ENCODE measurements at regions of chr9 and their contacts with region 1.

Region 1: DNA sequence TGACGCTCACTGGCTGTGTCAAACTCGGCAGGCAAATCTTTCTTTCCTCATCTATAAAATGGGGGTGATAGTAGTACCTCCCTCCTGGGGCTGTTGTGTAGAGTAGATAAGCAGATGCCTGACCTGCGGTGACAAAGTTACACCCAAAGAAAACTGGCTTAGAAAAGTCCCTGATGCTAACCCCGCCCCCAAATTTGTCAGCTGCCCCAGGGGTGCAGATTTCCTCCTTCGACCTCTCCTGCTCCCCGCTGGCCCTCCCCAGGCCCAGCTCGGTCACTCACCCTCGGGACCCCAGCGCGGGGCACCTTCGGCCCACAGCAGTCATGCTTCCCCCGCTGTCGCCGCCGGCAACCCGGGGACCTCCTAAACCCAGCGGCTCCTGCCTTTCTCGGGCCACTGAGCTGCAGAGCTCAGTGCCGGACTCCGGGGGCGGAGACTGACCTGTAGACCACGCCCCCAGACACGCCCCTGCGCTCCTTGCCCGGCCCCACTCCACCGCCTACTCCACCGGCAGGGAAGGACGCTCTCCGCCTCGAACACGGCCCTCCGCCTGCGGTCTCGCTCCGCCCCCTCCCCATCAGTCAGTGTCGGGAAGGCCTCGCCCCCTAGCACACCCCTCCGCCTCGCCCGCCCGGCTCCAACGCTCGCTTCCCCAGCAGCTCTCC is 7.4 kb downstream of the SH2D3C start:
- DNase-seq: peak; percentile 93

Region 2: DNA sequence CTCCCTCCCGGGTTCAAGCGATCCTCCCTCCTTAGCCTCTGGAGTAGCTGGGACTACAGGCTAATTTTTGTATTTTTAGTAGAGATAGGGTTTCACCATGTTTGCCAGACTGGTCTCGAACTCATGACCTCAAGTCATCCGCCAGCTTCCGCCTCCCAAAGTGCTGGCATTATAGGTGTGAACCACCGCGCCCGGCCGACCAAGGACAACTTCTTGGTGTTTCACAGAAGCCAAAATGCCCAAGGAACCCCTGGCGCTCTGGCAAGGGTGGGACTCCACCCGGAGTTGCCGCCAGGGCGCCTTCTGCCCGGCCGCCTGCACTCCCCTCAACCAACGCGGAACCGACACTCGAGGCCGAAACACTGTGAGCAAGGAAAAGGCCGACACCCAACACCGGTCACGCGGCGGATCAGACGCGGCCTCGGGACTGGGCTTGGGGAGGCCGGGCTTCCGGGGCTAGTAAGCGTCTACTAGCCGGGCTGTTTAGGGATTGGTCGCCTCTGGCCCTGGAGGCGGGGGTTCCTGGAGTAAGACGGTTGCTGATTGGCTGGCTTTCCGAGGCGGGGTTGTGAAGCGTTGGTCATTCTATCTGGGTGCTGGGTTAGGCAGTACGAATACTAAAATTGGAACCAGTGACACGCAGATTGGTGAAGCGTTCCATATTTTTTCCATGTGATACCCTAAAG is 71.9 kb before region 1 on chr9:
- in situ Hi-C with region 1: no loop called
- DNase-seq: peak; percentile 99

Region 3: GRCh38 chr9:127715394-127716337 is 55.4 kb before region 1 on chr9 and contains the starts of genes PTRH1 and TTC16:
- in situ Hi-C with region 1: no loop called
- DNase-seq: peak; percentile 97
- total RNA-seq, gene PTRH1: 33.3 and 35.0 TPM in 2 replicates
- total RNA-seq, gene TTC16: not detected in 2 replicates

Region 4: DNA sequence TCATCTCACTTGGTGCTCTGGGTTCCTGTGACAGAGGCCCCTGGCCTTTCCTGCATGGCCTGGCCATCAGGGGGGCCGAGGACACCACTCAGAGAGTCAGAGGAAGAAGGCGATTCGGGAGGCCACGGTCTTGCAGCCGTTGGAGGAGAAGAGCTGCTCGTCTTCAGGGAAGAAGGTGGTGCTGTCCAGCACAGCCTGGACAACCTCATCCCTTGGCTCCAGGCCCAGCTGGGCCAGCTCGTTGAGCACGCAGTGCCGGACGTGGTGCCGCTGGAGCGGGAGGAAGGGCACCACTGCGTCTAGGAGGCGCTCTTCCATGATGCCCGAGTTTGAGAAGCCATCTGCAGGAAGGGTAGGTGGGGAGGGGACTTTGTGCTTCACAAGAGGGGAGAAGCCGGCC is 39.1 kb before region 1 on chr9:
- in situ Hi-C with region 1: no loop called
- DNase-seq: peak; percentile 43

Region 5: DNA sequence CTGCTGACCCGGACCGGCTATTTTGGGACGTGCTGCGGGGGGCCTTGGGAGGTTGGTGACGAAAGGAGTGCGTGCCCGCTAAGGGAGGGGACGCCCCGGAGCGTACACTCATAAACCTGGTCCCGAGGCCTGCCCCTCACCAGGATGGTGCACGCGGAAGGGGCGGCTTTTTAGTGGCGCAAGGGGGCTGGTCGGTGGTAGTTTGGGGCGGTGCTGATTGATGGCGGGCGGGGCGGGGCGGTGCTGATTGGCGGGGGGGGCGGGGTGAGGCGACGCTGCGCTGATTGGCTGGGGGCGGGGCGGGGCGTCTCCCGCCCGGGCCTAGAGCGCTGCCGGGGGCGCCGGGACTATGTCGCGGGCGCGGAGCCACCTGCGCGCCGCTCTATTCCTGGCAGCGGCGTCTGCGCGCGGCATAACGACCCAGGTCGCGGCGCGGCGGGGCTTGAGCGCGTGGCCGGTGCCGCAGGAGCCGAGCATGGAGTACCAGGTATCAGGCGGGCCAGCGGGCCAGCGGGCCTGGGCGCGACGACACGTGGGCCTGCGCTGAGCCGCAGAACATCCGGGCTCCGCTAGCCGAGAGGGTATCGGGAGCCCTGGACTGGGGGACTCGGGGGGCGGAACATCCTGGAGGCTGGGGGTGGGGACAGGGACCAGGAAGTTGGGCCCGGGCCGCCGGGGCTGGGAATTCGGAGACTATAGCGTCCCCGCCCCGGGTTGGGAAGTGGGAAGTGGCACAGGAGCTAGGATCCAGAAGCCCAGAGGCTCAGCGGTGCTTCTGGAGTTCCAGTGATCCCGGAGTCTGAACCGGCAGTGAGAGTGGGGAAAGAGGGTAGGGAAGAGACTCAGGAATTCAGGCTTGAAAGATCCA is 31.8 kb after region 1 on chr9 and contains the start of gene FPGS:
- in situ Hi-C with region 1: no loop called
- DNase-seq: peak; percentile 85
- total RNA-seq, gene FPGS: 164 and 188 TPM in 2 replicates

Region 6: GRCh38 chr9:127937388-127938280 is 166.6 kb after region 1 on chr9 and contains the start of gene DPM2:
- in situ Hi-C with region 1: loop called (anchors 25 kb)
- DNase-seq: peak; percentile 85
- total RNA-seq, gene DPM2: 17.1 and 39.0 TPM in 2 replicates